Gastrocnemius medialis (tissue), 4 donors: ENCODE measurements at regions of chr19 and their contacts with region 1.

Region 1: DNA sequence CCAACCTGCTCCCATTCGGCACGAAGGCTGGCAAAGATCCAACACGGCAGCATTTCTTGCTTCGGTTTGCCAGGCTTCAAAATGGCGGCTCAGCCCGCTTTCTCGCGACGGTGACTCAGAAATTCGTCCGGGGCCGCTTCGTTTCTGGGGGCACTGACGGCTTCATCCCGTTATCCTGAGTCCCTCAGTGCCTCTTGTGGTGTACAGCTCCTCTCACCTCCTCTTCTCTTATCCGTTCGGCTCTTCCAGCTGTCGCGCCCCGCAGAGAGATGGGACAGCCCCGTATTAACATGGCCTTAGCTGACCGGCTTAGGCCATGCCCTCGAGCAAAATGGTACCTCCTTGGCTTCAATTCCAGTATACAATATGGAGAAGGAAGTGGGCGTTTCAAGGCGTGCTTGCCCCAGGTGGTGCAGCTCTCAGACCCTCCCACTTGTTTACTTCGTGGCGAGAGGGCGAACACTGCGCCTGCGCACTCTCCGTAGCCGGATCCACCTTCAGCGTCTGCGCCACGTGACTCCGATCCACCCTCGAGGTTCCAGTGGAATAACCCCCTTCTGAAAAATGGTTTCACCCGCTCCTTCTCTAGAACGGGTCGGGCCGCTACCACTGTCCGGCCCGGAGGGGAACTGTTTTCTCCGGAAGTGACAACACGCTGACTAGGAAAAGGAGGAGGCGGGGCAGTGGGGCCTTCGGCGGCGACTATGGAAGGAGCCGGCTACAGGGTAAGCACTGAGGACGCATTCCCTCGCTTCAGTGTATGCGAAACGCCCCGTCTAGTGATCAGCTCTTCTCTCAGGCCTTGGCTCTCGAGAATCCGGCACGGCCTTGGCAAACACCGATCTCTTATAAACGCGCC is at the starts of genes AKT1S1 and TBC1D17:
- DNase-seq: peak; percentile 100
- ATAC-seq: peak; percentile 85 to 87
- H3K4me3 ChIP-seq: peak within 1 kb of the TSS; percentile 91 to 95 (median 92)
- H3K27ac ChIP-seq: peak within 1 kb of the TSS; percentile 91 to 100 (median 99)
- H3K4me1 ChIP-seq: peaks cover 30 to 35% of the 10 kb centered on the region in 2 donors
- H3K27me3 ChIP-seq: no peaks in the 10 kb centered on the region
- CTCF ChIP-seq: no peak
- POLR2A ChIP-seq: peak; percentile 91 to 94
- total RNA-seq, gene AKT1S1: 23.8 to 56.8 (median 43.4) TPM
- total RNA-seq, gene TBC1D17: 48.7 to 84.3 (median 66.4) TPM

Region 2: GRCh38 chr19:48637170-48637947 is 1239.9 kb before region 1 on chr19 and contains the start of gene DBP:
- in situ Hi-C with region 1: no loop called
- intact Hi-C with region 1: loop called (anchors 10 kb)
- DNase-seq: peak; percentile 99 to 100
- ATAC-seq: peak; percentile 52 to 55
- H3K4me3 ChIP-seq: peak within 1 kb of the TSS; percentile 58 to 95 (median 76)
- H3K27ac ChIP-seq: peak within 1 kb of the TSS; percentile 97 to 100 (median 100)
- H3K4me1 ChIP-seq: peaks cover 37 to 46% of the 10 kb centered on the region in 2 donors
- H3K27me3 ChIP-seq: no peaks in the 10 kb centered on the region
- CTCF ChIP-seq: peak in 1 of 5 experiments; percentile 21
- POLR2A ChIP-seq: peak; percentile 59 to 76
- total RNA-seq, gene DBP: 1.7 to 12.9 (median 4.4) TPM

Region 3: GRCh38 chr19:49512970-49513745 is 364.1 kb before region 1 on chr19:
- in situ Hi-C with region 1: no loop called
- intact Hi-C with region 1: no loop called
- DNase-seq: peak in 1 of 2 donors; percentile 38
- ATAC-seq: peak; percentile 61 to 71
- H3K4me3 ChIP-seq: peak overlapping the region; percentile 73 to 86 (median 84)
- H3K27ac ChIP-seq: peak overlapping the region; percentile 87 to 91 (median 88)
- H3K4me1 ChIP-seq: peaks cover 9 to 23% of the 10 kb centered on the region in 2 donors
- H3K27me3 ChIP-seq: no peaks in the 10 kb centered on the region
- CTCF ChIP-seq: no peak
- POLR2A ChIP-seq: no peak

Region 4: GRCh38 chr19:49640113-49640898 is 236.9 kb before region 1 on chr19 and contains the start of gene RRAS:
- in situ Hi-C with region 1: no loop called
- intact Hi-C with region 1: loop called (anchors 2 kb)
- DNase-seq: peak; percentile 100
- ATAC-seq: peak; percentile 74 to 76
- H3K4me3 ChIP-seq: peak within 1 kb of the TSS; percentile 64 to 95 (median 80)
- H3K27ac ChIP-seq: peak within 1 kb of the TSS; percentile 93 to 99 (median 97)
- H3K4me1 ChIP-seq: peaks cover 31 to 37% of the 10 kb centered on the region in 2 donors
- H3K27me3 ChIP-seq: no peaks in the 10 kb centered on the region
- CTCF ChIP-seq: no peak
- POLR2A ChIP-seq: peak; percentile 84 to 94
- total RNA-seq, gene RRAS: 12.4 to 26.2 (median 24.2) TPM

Region 5: DNA sequence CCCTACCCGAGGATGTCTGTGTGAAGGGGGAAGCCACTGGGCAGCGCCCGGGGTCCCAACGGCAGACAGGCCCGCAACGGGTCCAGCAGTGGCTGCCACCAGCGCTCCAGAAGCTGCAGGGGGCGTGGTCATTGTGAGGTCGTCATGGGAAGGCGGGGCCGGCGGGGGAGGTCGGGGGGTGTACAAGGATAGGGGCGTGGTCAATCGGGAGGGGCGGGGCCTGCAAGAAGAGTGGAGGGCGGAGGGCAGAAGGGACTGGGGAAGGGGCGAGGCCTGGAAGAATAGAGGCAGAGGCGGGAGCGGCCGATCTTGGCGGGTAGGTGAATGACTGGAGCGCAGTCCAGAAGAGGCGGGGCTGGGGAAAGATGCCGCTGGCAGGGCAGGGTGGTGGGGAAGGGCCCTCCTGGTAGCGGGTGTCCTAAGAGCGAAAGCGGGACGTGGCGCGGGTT is 68.5 kb before region 1 on chr19:
- in situ Hi-C with region 1: loop called in 2 of 4 experiments (anchors 10 kb)
- intact Hi-C with region 1: loop called (anchors 1 kb)
- DNase-seq: peak; percentile 92 to 94
- ATAC-seq: peak; percentile 44 to 57
- H3K4me3 ChIP-seq: peak overlapping the region; percentile 67 to 87 (median 80)
- H3K27ac ChIP-seq: peak overlapping the region; percentile 91 to 96 (median 94)
- H3K4me1 ChIP-seq: peaks cover 17 to 21% of the 10 kb centered on the region in 2 donors
- H3K27me3 ChIP-seq: no peaks in the 10 kb centered on the region
- CTCF ChIP-seq: peak in 1 of 5 experiments; percentile 14
- POLR2A ChIP-seq: peak; percentile 77 to 82

Region 6: GRCh38 chr19:49850473-49851342 is 26.5 kb before region 1 on chr19 and contains the start of gene PTOV1:
- in situ Hi-C with region 1: no loop called
- intact Hi-C with region 1: loop called (anchors 1 kb)
- DNase-seq: peak; percentile 88 to 92
- ATAC-seq: peak; percentile 89
- H3K4me3 ChIP-seq: peak within 1 kb of the TSS; percentile 73 to 79 (median 74)
- H3K27ac ChIP-seq: peak within 1 kb of the TSS; percentile 94 to 99 (median 97)
- H3K4me1 ChIP-seq: peaks cover 24 to 29% of the 10 kb centered on the region in 2 donors
- H3K27me3 ChIP-seq: no peaks in the 10 kb centered on the region
- CTCF ChIP-seq: peak in 1 of 5 experiments; percentile 11
- POLR2A ChIP-seq: peak; percentile 87 to 91
- total RNA-seq, gene PTOV1: 77.6 to 88.2 (median 87.0) TPM

Region 7: DNA sequence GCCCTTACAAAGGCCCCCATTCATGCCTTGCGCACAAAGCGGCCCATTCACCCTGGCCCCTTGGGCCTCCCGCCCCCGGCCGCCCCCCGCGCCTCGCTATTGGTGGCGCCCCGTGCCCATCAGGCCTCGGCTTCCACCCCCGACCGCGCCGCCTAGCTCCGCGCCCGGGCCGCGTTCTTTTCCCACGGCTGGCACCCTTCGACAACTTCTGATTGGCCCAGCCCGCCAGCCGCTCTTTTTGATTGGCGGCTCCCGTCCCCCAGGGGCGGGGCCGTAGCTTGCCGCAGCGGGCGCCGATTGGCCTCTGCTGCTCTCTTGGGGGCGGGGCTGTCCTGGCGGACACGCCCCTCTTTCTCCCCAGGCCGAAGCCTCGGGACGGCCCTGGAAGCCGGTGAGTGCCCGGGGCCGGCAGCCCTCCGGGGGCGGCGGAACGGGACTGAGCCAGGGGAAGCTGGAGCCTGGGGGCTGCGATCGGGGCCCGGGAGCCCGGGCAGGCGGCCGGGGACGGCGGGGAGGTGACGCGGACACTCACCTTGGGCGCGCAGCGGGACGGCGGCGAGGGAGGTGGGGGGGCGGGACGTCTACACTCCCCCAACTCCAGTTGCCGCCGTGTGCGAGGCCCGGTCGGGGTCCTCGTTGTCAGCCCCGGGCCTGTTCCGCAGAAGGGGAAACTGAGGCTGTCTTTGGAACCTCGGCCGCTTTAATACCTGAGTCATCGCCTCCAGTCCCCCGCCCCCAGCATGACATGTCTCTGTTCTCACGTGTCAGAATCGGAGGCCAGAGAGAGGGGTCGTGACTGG is 326.2 kb after region 1 on chr19 and contains the start of gene MYH14:
- in situ Hi-C with region 1: no loop called
- intact Hi-C with region 1: loop called (anchors 5 kb)
- DNase-seq: peak; percentile 91 to 96
- ATAC-seq: peak; percentile 71 to 82
- H3K4me3 ChIP-seq: peak within 1 kb of the TSS; percentile 70 to 95 (median 75)
- H3K27ac ChIP-seq: peak within 1 kb of the TSS; percentile 95 to 99 (median 98)
- H3K4me1 ChIP-seq: peaks cover 33 to 35% of the 10 kb centered on the region in 2 donors
- H3K27me3 ChIP-seq: no peaks in the 10 kb centered on the region
- CTCF ChIP-seq: no peak
- POLR2A ChIP-seq: peak; percentile 93 to 94
- total RNA-seq, gene MYH14: 103 to 174 (median 141) TPM